ENCODE measurements at regions of chr9 and their contacts with region 1.

Region 1: DNA sequence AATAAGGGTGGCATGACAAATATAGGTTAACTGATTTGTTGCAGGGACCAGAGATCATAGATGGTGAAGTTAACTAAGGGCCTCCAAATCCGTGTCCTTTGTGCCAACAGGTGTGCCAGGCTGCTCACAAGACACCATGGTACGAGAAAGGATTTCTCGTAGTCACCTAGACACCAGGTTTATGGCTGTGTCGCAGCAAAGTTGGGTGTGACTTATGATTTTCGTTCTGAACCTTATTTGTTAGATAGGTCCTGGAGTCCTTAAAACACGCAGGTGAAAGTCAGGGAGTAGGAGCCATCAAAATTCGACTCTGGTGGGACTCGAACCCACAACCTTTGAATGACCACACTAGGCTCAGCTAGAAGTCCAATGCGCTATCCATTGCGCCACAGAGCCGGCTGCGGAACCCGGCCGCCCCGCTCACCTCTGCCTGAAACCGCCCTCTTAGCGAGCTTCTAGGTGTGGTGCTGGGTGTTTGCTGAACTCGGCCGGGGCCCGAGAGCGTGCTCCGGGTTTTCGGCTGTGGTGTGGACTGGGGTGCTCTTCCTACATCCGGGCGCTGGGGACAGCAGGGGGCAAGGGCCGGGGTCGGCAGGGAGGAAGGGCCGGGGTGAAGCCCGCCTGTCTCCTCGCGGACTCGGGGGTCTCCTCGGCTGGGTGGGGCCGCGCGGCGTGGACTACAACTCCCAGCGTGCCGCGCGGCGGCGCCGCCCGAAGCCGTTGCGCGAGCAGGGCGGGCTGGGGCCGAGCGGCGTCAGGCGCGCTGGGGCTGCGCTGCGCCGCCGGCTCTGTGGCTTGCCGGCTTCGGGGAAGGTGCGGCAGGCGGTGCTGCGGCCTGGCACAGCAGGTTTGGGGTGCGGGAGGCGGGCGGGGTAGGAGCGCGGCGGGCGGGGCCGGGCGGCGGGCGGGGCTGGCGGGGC is at the start of gene SLC27A4:
- DNase-seq: peak; percentile 75 to 86 (median 82)
- ATAC-seq: peak; percentile 96
- H3K4me3 ChIP-seq: peak within 1 kb of the TSS; percentile 66
- H3K4me3 Mint-ChIP-seq: peak within 1 kb of the TSS; percentile 87 to 98 (median 95)
- H3K27ac ChIP-seq: peak within 1 kb of the TSS; percentile 69
- H3K27ac Mint-ChIP-seq: peak within 1 kb of the TSS; percentile 70 to 93 (median 90)
- H3K4me1 ChIP-seq: peaks cover 4 to 12% of the 10 kb centered on the region in 2 donors
- H3K4me1 Mint-ChIP-seq: peaks cover 6 to 11% (median 9%) of the 10 kb centered on the region in 7 donors
- H3K27me3 ChIP-seq: no peaks in the 10 kb centered on the region
- H3K27me3 Mint-ChIP-seq: no peaks in the 10 kb centered on the region
- total RNA-seq, gene SLC27A4: 6.4 to 20.1 (median 12.1) TPM

Region 2: DNA sequence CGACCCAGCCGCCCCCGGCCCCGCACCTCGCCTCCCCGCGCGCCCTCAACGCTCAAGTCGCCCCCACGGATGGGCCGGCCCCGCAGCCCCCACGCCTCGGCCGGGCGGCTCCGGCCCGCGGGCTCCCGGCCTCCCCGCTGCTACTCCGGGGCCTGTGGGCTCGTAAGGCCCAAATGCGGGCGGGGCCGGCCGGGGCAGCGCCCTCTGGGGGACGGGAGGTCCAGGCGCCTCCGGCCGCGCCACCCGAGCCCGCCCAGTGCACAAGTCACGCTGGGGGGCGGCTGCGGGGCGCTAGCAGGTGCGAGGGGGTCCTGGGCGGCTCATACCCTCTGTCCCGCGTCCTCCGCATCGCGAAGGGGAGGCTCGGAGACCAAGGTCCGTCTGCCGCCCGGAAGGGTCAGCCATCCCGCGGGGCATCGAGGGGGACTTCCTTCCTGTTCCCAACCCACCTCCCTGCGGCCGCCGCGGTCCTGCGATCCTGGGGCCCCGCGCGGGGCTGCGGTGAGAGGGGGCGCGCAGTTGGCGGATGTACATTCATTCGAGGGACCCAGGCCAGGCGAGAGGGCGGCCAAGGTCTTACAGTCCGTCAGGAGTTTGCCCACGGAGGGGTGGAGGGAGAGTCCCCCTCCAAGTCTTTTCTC is 148.5 kb before region 1 on chr9 and contains the start of gene CIZ1:
- CTCF ChIA-PET with region 1: interaction called, 3 read pairs
- POLR2A ChIA-PET with region 1: no interaction called
- intact Hi-C with region 1: loop called in 1 of 2 experiments (anchors 1 kb)
- DNase-seq: peak; percentile 51 to 86 (median 69)
- ATAC-seq: peak; percentile 95
- H3K4me3 ChIP-seq: peak within 1 kb of the TSS; percentile 76
- H3K4me3 Mint-ChIP-seq: peak within 1 kb of the TSS; percentile 92 to 99 (median 96)
- H3K27ac ChIP-seq: peak within 1 kb of the TSS; percentile 89
- H3K27ac Mint-ChIP-seq: peak within 1 kb of the TSS; percentile 84 to 93 (median 90)
- H3K4me1 ChIP-seq: peaks cover 12 to 16% of the 10 kb centered on the region in 2 donors
- H3K4me1 Mint-ChIP-seq: peaks cover 13 to 39% (median 31%) of the 10 kb centered on the region in 7 donors
- H3K27me3 ChIP-seq: no peaks in the 10 kb centered on the region
- H3K27me3 Mint-ChIP-seq: peaks cover 0 to 13% (median 0%) of the 10 kb centered on the region in 5 donors
- total RNA-seq, gene CIZ1: 110 to 163 (median 142) TPM

Region 3: GRCh38 chr9:128218518-128219389 is 121.3 kb before region 1 on chr9:
- CTCF ChIA-PET with region 1: no interaction called
- POLR2A ChIA-PET with region 1: no interaction called
- intact Hi-C with region 1: loop called in 1 of 2 experiments (anchors 1 kb)
- DNase-seq: peak; percentile 70 to 93 (median 89)
- ATAC-seq: peak; percentile 98
- H3K4me3 ChIP-seq: peak overlapping the region; percentile 62
- H3K4me3 Mint-ChIP-seq: peak overlapping the region; percentile 80 to 93 (median 83)
- H3K27ac ChIP-seq: peak overlapping the region; percentile 47
- H3K27ac Mint-ChIP-seq: peak overlapping the region; percentile 18 to 93 (median 65)
- H3K4me1 ChIP-seq: peaks cover 5 to 7% of the 10 kb centered on the region in 2 donors
- H3K4me1 Mint-ChIP-seq: peaks cover 9 to 13% (median 12%) of the 10 kb centered on the region in 7 donors
- H3K27me3 ChIP-seq: no peaks in the 10 kb centered on the region
- H3K27me3 Mint-ChIP-seq: peaks cover 0 to 8% (median 0%) of the 10 kb centered on the region in 5 donors

Region 4: DNA sequence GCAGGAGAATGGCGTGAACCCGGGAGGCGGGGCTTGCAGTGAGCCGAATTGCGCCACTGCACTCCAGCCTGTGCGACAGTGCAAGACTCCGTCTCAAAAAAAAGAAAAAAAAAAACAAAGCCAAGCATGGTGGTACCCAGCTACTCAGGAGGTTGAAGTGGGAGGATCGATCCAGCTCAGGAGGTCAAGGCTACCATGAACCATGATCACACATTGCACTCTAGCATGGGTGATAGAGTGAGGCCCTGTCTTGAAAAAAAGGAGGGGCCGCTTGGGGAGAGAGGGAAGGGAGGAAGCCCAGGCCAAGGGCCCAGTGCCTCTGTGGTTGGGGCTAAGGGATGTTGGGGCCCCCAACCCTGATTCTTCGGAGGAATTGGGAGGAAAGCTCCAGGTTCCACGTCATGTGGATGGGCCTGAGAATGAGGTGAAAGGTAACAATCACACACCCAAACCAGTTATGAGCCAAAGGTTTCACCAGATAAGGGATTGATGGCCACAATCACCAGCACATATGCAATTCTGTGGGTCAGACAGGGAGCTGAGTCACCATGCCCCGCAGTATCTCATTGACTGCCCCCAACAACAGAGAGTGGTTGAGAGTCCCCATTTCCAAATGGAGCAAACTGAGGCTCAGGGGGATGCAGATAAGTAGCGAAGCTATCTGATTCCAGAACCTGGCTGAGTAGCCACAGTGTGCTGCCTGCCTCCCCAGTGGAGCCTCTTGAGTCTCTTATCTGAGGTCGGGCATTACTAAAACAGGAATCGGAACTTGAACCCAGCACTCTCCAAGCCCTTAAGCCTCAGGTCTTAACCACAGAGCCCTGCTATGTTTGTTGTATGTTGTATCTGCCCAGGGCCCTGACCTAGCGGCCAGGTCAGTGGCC is 43.5 kb before region 1 on chr9:
- CTCF ChIA-PET with region 1: interaction called, 6 read pairs
- POLR2A ChIA-PET with region 1: interaction called, 4 read pairs
- intact Hi-C with region 1: loop called (anchors 1 kb)
- DNase-seq: no peak
- ATAC-seq: no peak
- H3K4me3 ChIP-seq: no peak overlapping the region
- H3K4me3 Mint-ChIP-seq: no peak overlapping the region
- H3K27ac ChIP-seq: no peak overlapping the region
- H3K27ac Mint-ChIP-seq: no peak overlapping the region
- H3K4me1 ChIP-seq: no peaks in the 10 kb centered on the region
- H3K4me1 Mint-ChIP-seq: peaks cover 0 to 5% (median 4%) of the 10 kb centered on the region in 7 donors
- H3K27me3 ChIP-seq: no peaks in the 10 kb centered on the region
- H3K27me3 Mint-ChIP-seq: no peaks in the 10 kb centered on the region

Region 5: DNA sequence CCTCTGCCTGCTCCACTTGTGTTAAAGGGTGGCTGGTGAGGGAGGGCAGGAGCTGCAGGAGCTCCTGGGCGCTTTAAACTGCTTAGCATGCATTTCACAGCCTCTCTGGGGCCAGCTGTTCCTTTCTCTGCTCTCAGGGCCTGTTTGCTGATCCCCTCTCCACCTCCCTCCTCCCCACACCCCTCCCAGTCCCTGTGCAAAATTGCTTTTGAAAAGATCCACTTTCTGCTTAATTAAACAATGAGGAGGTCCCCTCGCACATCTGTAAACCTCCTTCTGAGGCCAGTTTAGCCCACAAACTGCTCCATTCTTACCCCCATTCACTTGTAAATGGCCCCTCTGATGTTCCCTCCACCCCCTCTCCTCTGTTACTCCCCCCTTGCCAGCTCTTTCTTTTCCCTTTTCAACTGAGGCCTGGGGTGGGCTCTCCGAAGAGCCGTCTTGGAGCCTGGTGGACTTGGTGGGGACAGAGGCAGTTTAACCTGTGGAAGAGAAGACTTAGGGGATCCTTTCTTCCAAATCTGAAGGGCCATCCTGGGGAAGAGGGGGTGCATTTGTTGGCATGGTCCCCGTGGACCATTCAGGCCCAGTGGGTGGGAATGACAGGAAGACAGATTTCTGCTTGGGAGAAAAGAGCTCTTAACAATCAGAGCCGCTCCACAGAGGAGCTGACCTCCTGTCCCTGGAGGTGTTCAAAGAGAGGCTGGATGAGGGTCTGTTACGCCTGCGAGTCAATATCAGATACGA is 43.1 kb after region 1 on chr9:
- CTCF ChIA-PET with region 1: no interaction called
- POLR2A ChIA-PET with region 1: no interaction called
- intact Hi-C with region 1: no loop called
- DNase-seq: no peak
- ATAC-seq: no peak
- H3K4me3 ChIP-seq: no peak overlapping the region
- H3K4me3 Mint-ChIP-seq: no peak overlapping the region
- H3K27ac ChIP-seq: no peak overlapping the region
- H3K27ac Mint-ChIP-seq: no peak overlapping the region
- H3K4me1 ChIP-seq: no peaks in the 10 kb centered on the region
- H3K4me1 Mint-ChIP-seq: peaks cover 0 to 3% (median 0%) of the 10 kb centered on the region in 7 donors
- H3K27me3 ChIP-seq: no peaks in the 10 kb centered on the region
- H3K27me3 Mint-ChIP-seq: no peaks in the 10 kb centered on the region